ENCODE measurements at regions of chr1 and their contacts with region 1.

Region 1: DNA sequence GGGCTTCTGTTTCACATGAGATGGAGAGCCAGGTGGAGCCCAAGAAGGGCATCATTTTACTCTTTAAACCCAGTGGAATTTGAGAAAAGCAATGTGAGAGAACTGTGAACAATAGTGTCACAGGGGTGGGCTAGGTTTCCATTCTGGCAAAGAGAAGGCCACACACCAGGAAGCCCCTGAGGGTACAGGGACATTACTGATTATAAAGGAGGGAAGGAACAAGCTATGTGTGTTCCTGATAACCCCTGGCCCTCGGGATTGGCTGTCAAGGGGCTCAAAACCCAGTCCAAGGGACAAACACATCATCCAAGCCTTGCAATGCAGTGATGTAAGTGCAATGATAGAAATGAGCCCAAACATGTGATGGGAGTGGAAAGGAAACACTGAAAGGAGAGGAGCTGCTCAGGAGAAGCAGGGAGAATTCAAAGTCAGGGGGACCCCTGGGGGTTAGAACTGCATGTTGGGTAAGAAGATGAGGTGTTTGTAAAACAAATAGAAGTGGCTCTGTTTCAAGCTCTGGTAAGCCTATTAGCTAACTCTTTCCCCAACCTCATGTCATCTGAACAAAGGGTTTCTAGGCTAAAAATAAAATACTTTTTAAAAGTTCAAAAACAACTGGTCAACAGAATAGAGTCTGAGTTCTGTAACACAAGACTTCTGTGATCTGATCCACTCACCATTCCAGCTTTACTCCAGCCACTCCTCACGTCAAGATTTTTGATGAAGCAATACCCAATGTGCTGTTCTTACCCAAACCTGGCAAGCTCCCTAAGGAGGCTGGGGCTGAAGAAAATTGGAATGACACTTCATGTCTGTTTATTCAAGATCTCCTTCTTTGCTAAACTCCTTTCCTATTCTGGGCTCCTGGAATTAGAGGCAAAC is 51.1 kb upstream of the IL12RB2 start:
- DNase-seq: no peak
- H3K4me3 ChIP-seq: no peak overlapping the region
- H3K27ac ChIP-seq: no peak overlapping the region
- H3K4me1 ChIP-seq: no peaks in the 10 kb centered on the region
- H3K27me3 ChIP-seq: no peaks in the 10 kb centered on the region
- CTCF ChIP-seq: no peak
- EP300 ChIP-seq: no peak
- POLR2A ChIP-seq: no peak

Region 2: GRCh38 chr1:67097305-67097704 is 159.2 kb before region 1 on chr1:
- in situ Hi-C with region 1: no loop called
- intact Hi-C with region 1: no loop called
- DNase-seq: no peak
- H3K4me3 ChIP-seq: no peak overlapping the region
- H3K27ac ChIP-seq: no peak overlapping the region
- H3K4me1 ChIP-seq: no peaks in the 10 kb centered on the region
- H3K27me3 ChIP-seq: no peaks in the 10 kb centered on the region
- CTCF ChIP-seq: no peak
- EP300 ChIP-seq: no peak
- POLR2A ChIP-seq: no peak

Region 3: DNA sequence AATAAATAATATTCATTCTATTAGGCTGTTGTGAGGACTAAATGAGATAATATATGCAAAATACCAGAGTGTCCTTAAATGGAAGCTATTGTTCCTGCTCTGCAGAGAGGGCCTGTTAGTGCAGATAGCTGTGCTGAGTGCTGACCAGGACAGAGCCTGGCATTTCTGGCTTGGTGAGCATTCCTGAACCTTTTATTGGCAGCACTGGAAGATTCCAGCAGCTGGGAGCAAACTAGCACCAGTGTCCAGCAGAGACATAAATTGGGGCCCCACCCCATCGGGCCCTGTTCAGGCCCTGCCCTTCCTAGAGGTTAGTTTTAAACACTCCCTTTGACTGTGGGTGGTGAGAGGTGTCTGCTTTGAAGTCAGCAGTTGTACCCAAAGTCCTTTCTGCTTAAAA is 342.6 kb after region 1 on chr1:
- in situ Hi-C with region 1: no loop called
- intact Hi-C with region 1: no loop called
- DNase-seq: peak; percentile 24
- H3K4me3 ChIP-seq: no peak overlapping the region
- H3K27ac ChIP-seq: no peak overlapping the region
- H3K4me1 ChIP-seq: peaks cover 0 to 8% (median 3%) of the 10 kb centered on the region in 4 donors
- H3K27me3 ChIP-seq: no peaks in the 10 kb centered on the region
- CTCF ChIP-seq: no peak
- EP300 ChIP-seq: no peak
- POLR2A ChIP-seq: no peak

Region 4: GRCh38 chr1:69038379-69038778 is 1781.8 kb after region 1 on chr1:
- in situ Hi-C with region 1: no loop called
- intact Hi-C with region 1: loop called (anchors 10 kb)
- DNase-seq: no peak
- H3K4me3 ChIP-seq: no peak overlapping the region
- H3K27ac ChIP-seq: no peak overlapping the region
- H3K4me1 ChIP-seq: no peaks in the 10 kb centered on the region
- H3K27me3 ChIP-seq: no peaks in the 10 kb centered on the region
- CTCF ChIP-seq: no peak
- EP300 ChIP-seq: no peak
- POLR2A ChIP-seq: no peak

Measured in transverse colon (tissue), 4 donors.